Activated CD4-positive, alpha-beta memory T cell treated with anti-CD3 and anti-CD28 coated beads, Interleukin-2, amount 10 ng/mL, durations not matched to agents 7 days and 5 days (primary cell): ENCODE measurements at regions of chr16 and their contacts with region 1.

Region 1: GRCh38 chr16:4416200-4417032 is at the start of gene CORO7:
- DNase-seq: peak; percentile 98
- H3K4me3 Mint-ChIP-seq: peak within 1 kb of the TSS; percentile 95
- H3K27ac Mint-ChIP-seq: peak within 1 kb of the TSS; percentile 99
- H3K4me1 Mint-ChIP-seq: peaks cover 47% of the 10 kb centered on the region
- H3K27me3 Mint-ChIP-seq: peaks cover 4% of the 10 kb centered on the region
- total RNA-seq, gene CORO7: 244 to 245 TPM

Region 2: GRCh38 chr16:4019371-4019791 is 397.0 kb before region 1 on chr16:
- CTCF ChIA-PET with region 1: no interaction called
- POLR2A ChIA-PET with region 1: no interaction called
- DNase-seq: no peak
- H3K4me3 Mint-ChIP-seq: peak overlapping the region; percentile 36
- H3K27ac Mint-ChIP-seq: no peak overlapping the region
- H3K4me1 Mint-ChIP-seq: peaks cover 21% of the 10 kb centered on the region
- H3K27me3 Mint-ChIP-seq: no peaks in the 10 kb centered on the region

Region 3: DNA sequence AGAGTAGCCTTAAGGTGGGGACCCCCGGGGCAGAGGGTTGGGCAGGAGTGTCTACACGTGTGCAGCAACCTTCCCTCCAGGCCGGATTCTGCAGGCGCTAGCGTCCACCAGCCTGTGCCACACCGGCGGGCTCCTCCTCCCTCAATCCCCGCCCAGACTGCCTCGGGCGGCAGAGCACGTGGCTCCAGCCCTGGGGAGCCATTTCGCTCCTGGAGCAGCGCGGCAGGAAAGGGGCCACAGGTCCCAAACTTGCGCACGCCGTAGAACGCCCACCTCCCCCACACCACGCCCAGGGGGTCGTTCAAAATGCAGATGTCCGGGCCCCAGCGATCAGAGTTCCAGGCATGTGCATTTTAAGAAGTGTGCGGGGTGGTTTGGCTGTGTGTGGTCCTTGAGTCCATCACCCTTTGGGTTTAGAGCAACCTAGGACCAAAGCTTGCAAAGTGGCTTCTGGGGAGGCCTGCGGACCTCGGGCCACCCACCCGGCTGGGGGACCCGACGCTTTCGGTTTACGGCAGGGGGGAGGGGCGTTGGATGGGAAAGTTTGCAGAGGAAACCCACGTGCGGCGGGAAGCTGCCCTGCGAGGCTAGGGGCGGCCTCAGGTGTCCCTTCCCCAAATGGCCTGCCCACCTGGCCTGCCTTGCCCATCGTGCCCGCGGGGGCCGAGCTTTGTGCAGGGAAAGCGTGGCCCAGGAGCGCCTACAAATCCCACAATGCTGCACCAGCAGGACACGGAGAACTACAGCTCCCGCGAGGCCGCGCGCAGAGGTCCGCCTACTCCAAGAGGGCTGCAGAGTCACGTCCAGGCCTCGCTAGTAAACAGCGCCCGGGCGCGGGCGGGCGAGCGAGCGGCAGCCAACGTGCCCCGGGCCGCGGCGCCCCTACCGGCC is 145.0 kb before region 1 on chr16:
- CTCF ChIA-PET with region 1: interaction called, 3 read pairs
- POLR2A ChIA-PET with region 1: interaction called, 16 read pairs
- DNase-seq: peak; percentile 93
- H3K4me3 Mint-ChIP-seq: peak overlapping the region; percentile 81
- H3K27ac Mint-ChIP-seq: peak overlapping the region; percentile 89
- H3K4me1 Mint-ChIP-seq: peaks cover 22% of the 10 kb centered on the region
- H3K27me3 Mint-ChIP-seq: peaks cover 3% of the 10 kb centered on the region

Region 4: GRCh38 chr16:4402439-4403132 is 13.8 kb before region 1 on chr16:
- CTCF ChIA-PET with region 1: interaction called, 52 read pairs
- POLR2A ChIA-PET with region 1: interaction called, 30 read pairs
- DNase-seq: peak; percentile 63
- H3K4me3 Mint-ChIP-seq: no peak overlapping the region
- H3K27ac Mint-ChIP-seq: no peak overlapping the region
- H3K4me1 Mint-ChIP-seq: peaks cover 12% of the 10 kb centered on the region
- H3K27me3 Mint-ChIP-seq: no peaks in the 10 kb centered on the region

Region 5: GRCh38 chr16:4465977-4466779 is 49.8 kb after region 1 on chr16:
- CTCF ChIA-PET with region 1: interaction called, 5 read pairs
- POLR2A ChIA-PET with region 1: interaction called, 85 read pairs
- DNase-seq: peak; percentile 84
- H3K4me3 Mint-ChIP-seq: peak overlapping the region; percentile 1
- H3K27ac Mint-ChIP-seq: peak overlapping the region; percentile 87
- H3K4me1 Mint-ChIP-seq: peaks cover 31% of the 10 kb centered on the region
- H3K27me3 Mint-ChIP-seq: no peaks in the 10 kb centered on the region

Region 6: GRCh38 chr16:4580245-4580644 is 163.8 kb after region 1 on chr16:
- CTCF ChIA-PET with region 1: no interaction called
- POLR2A ChIA-PET with region 1: no interaction called
- DNase-seq: no peak
- H3K4me3 Mint-ChIP-seq: no peak overlapping the region
- H3K27ac Mint-ChIP-seq: no peak overlapping the region
- H3K4me1 Mint-ChIP-seq: no peaks in the 10 kb centered on the region
- H3K27me3 Mint-ChIP-seq: no peaks in the 10 kb centered on the region

Region 7: GRCh38 chr16:4616047-4616811 is 199.8 kb after region 1 on chr16:
- CTCF ChIA-PET with region 1: no interaction called
- POLR2A ChIA-PET with region 1: interaction called, 14 read pairs
- DNase-seq: peak; percentile 100
- H3K4me3 Mint-ChIP-seq: peak overlapping the region; percentile 94
- H3K27ac Mint-ChIP-seq: peak overlapping the region; percentile 97
- H3K4me1 Mint-ChIP-seq: peaks cover 33% of the 10 kb centered on the region
- H3K27me3 Mint-ChIP-seq: no peaks in the 10 kb centered on the region